ENCODE measurements at regions of chr16 and their contacts with region 1.

Region 1: DNA sequence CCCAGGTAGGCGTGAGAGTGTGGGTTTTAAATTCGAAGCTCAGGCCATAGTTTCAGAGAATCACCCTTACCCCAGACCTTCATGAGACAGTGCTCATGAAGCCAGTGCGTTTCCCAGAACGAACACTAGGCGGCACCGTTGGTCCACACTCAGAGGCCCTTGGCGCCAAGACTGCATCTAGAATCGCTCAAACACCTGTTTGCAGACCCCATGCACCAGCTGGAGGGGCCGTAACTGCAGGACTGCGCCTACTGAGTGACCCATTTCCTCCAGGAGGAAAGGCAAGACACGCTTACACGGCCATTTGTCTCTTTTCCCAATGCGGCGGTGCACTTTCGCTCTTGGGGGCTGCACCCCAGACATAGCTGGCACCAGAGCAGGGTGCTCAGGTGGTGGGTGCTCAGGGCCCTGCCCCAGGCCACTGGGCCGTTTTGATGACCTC is 34.0 kb downstream of the ADGRG5 start:
- DNase-seq: peak; percentile 71 to 92 (median 87)
- ATAC-seq: peak; percentile 86
- H3K4me3 ChIP-seq: no peak overlapping the region
- H3K4me3 Mint-ChIP-seq: no peak overlapping the region
- H3K27ac ChIP-seq: peak overlapping the region in 1 of 2 experiments; percentile 87
- H3K27ac Mint-ChIP-seq: no peak overlapping the region
- H3K4me1 ChIP-seq: peaks cover 33% of the 10 kb centered on the region
- H3K4me1 Mint-ChIP-seq: peaks cover 44% of the 10 kb centered on the region
- H3K27me3 ChIP-seq: no peaks in the 10 kb centered on the region
- H3K27me3 Mint-ChIP-seq: no peaks in the 10 kb centered on the region
- CTCF ChIP-seq: peak; percentile 96

Region 2: GRCh38 chr16:57178793-57179212 is 397.6 kb before region 1 on chr16:
- CTCF ChIA-PET with region 1: no interaction called
- POLR2A ChIA-PET with region 1: no interaction called
- intact Hi-C with region 1: no loop called
- DNase-seq: no peak
- ATAC-seq: no peak
- H3K4me3 ChIP-seq: no peak overlapping the region
- H3K4me3 Mint-ChIP-seq: no peak overlapping the region
- H3K27ac ChIP-seq: no peak overlapping the region
- H3K27ac Mint-ChIP-seq: no peak overlapping the region
- H3K4me1 ChIP-seq: no peaks in the 10 kb centered on the region
- H3K4me1 Mint-ChIP-seq: peaks cover 15% of the 10 kb centered on the region
- H3K27me3 ChIP-seq: no peaks in the 10 kb centered on the region
- H3K27me3 Mint-ChIP-seq: no peaks in the 10 kb centered on the region
- CTCF ChIP-seq: no peak

Region 3: DNA sequence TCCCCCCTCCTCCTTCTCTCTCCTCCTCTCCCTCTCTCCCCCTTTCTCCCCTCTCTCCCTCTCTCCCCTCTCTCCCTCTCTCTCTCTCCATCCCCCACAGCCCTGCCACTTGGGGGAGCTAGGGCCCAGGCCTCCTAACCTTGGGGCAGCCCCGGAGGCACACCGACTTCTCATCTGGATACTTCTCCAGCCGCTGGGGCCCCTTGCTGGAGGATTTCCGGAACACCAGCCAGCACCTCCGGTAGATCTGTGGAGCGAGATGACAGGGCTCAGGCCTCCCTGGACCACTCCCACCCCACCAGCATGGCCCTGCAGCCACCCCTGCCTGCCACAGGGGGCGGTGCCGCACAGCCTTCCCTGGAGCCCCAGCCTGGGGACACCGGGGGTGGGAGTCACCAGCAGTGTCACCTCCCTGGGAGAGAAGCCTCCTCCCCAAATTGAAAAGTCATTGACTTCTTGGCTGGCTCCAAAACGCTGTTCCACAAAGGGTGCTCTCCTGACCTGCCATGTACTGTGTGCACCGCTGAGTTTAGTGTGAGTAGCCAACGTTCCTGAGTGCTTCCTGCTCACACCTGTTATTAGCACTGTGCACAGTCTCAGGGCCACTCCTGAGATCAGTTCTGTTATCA is 100.6 kb before region 1 on chr16:
- CTCF ChIA-PET with region 1: interaction called, 3 read pairs
- POLR2A ChIA-PET with region 1: no interaction called
- intact Hi-C with region 1: loop called in 1 of 2 experiments (anchors 1 kb)
- DNase-seq: peak in 8 of 9 experiments; percentile 44 to 84 (median 79)
- ATAC-seq: peak; percentile 98
- H3K4me3 ChIP-seq: peak overlapping the region in 1 of 2 experiments; percentile 21
- H3K4me3 Mint-ChIP-seq: peak overlapping the region; percentile 39
- H3K27ac ChIP-seq: no peak overlapping the region
- H3K27ac Mint-ChIP-seq: no peak overlapping the region
- H3K4me1 ChIP-seq: peaks cover 15% of the 10 kb centered on the region
- H3K4me1 Mint-ChIP-seq: peaks cover 13% of the 10 kb centered on the region
- H3K27me3 ChIP-seq: no peaks in the 10 kb centered on the region
- H3K27me3 Mint-ChIP-seq: no peaks in the 10 kb centered on the region
- CTCF ChIP-seq: peak; percentile 87

Region 4: DNA sequence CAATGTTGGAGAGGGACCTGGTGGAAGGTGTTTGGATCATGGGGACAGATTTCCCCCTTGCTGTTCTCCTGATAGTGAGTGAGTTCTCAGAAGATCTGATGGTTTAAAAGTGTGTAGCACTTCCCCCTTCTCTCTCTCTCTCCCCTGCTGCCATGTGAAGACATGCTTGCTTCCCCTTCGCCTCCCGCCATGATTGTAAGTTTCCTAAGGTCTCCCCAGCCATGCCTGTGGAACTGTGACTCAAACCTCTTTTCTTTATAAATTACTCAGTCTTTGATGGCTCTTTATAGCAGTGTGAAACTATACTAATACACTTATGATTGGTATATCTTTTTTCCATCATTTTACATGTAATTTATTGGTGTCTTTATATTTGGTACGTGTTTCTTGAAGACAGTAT is 20.6 kb before region 1 on chr16:
- CTCF ChIA-PET with region 1: interaction called, 24 read pairs
- POLR2A ChIA-PET with region 1: interaction called, 4 read pairs
- intact Hi-C with region 1: no loop called
- DNase-seq: no peak
- ATAC-seq: no peak
- H3K4me3 ChIP-seq: no peak overlapping the region
- H3K4me3 Mint-ChIP-seq: no peak overlapping the region
- H3K27ac ChIP-seq: no peak overlapping the region
- H3K27ac Mint-ChIP-seq: no peak overlapping the region
- H3K4me1 ChIP-seq: peaks cover 3% of the 10 kb centered on the region
- H3K4me1 Mint-ChIP-seq: peaks cover 26% of the 10 kb centered on the region
- H3K27me3 ChIP-seq: no peaks in the 10 kb centered on the region
- H3K27me3 Mint-ChIP-seq: no peaks in the 10 kb centered on the region
- CTCF ChIP-seq: no peak

Region 5: GRCh38 chr16:57609541-57610401 is 33.3 kb after region 1 on chr16:
- CTCF ChIA-PET with region 1: interaction called, 62 read pairs
- POLR2A ChIA-PET with region 1: interaction called, 3 read pairs
- intact Hi-C with region 1: no loop called
- DNase-seq: peak in 8 of 9 experiments; percentile 22 to 88 (median 63)
- ATAC-seq: peak; percentile 95
- H3K4me3 ChIP-seq: peak overlapping the region in 1 of 2 experiments; percentile 13
- H3K4me3 Mint-ChIP-seq: peak overlapping the region; percentile 74
- H3K27ac ChIP-seq: peak overlapping the region; percentile 11 to 81
- H3K27ac Mint-ChIP-seq: peak overlapping the region; percentile 84
- H3K4me1 ChIP-seq: peaks cover 15% of the 10 kb centered on the region
- H3K4me1 Mint-ChIP-seq: peaks cover 48% of the 10 kb centered on the region
- H3K27me3 ChIP-seq: no peaks in the 10 kb centered on the region
- H3K27me3 Mint-ChIP-seq: no peaks in the 10 kb centered on the region
- CTCF ChIP-seq: peak; percentile 39

Region 6: DNA sequence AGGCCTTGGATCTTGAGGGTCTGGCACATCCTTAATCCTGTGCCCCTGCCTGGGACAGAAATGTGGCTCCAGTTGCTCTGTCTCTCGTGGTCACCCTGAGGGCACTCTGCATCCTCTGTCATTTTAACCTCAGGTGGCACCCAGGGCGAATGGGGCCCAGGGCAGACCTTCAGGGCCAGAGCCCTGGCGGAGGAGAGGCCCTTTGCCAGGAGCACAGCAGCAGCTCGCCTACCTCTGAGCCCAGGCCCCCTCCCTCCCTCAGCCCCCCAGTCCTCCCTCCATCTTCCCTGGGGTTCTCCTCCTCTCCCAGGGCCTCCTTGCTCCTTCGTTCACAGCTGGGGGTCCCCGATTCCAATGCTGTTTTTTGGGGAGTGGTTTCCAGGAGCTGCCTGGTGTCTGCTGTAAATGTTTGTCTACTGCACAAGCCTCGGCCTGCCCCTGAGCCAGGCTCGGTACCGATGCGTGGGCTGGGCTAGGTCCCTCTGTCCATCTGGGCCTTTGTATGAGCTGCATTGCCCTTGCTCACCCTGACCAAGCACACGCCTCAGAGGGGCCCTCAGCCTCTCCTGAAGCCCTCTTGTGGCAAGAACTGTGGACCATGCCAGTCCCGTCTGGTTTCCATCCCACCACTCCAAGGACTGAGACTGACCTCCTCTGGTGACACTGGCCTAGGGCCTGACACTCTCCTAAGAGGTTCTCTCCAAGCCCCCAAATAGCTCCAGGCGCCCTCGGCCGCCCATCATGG is 87.6 kb after region 1 on chr16:
- CTCF ChIA-PET with region 1: interaction called, 12 read pairs
- POLR2A ChIA-PET with region 1: no interaction called
- intact Hi-C with region 1: no loop called
- DNase-seq: no peak
- ATAC-seq: no peak
- H3K4me3 ChIP-seq: no peak overlapping the region
- H3K4me3 Mint-ChIP-seq: no peak overlapping the region
- H3K27ac ChIP-seq: no peak overlapping the region
- H3K27ac Mint-ChIP-seq: no peak overlapping the region
- H3K4me1 ChIP-seq: no peaks in the 10 kb centered on the region
- H3K4me1 Mint-ChIP-seq: no peaks in the 10 kb centered on the region
- H3K27me3 ChIP-seq: no peaks in the 10 kb centered on the region
- H3K27me3 Mint-ChIP-seq: no peaks in the 10 kb centered on the region
- CTCF ChIP-seq: no peak

Region 7: DNA sequence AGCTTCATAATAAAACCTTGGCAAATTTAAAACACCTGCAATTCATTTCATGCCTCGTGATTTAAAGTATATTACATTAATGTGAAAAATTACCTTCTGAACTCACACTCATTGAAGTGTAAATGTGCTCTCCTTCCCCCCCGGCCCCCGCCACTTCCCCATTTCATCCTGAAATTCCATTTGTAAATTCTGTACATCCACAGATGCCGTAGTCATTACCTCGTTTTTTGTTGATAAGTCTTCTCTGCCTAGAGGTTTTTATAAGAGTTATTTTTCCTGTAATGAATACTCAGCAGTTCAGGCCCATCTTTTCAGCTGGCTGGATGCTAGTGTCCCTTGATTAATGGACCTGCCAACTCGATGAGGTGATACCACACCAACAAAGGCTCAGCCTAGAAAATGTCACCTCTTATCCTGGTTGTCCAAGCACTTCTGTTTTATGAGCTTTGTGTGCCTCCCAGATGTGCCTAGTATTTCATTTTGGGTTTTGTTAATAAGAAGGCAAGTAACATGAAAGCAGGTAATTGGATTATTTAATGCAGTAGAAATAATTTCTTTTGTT is 290.6 kb after region 1 on chr16:
- CTCF ChIA-PET with region 1: no interaction called
- POLR2A ChIA-PET with region 1: no interaction called
- intact Hi-C with region 1: no loop called
- DNase-seq: no peak
- ATAC-seq: no peak
- H3K4me3 ChIP-seq: no peak overlapping the region
- H3K4me3 Mint-ChIP-seq: no peak overlapping the region
- H3K27ac ChIP-seq: no peak overlapping the region
- H3K27ac Mint-ChIP-seq: no peak overlapping the region
- H3K4me1 ChIP-seq: no peaks in the 10 kb centered on the region
- H3K4me1 Mint-ChIP-seq: no peaks in the 10 kb centered on the region
- H3K27me3 ChIP-seq: no peaks in the 10 kb centered on the region
- H3K27me3 Mint-ChIP-seq: peaks cover 17% of the 10 kb centered on the region
- CTCF ChIP-seq: no peak

Region 8: DNA sequence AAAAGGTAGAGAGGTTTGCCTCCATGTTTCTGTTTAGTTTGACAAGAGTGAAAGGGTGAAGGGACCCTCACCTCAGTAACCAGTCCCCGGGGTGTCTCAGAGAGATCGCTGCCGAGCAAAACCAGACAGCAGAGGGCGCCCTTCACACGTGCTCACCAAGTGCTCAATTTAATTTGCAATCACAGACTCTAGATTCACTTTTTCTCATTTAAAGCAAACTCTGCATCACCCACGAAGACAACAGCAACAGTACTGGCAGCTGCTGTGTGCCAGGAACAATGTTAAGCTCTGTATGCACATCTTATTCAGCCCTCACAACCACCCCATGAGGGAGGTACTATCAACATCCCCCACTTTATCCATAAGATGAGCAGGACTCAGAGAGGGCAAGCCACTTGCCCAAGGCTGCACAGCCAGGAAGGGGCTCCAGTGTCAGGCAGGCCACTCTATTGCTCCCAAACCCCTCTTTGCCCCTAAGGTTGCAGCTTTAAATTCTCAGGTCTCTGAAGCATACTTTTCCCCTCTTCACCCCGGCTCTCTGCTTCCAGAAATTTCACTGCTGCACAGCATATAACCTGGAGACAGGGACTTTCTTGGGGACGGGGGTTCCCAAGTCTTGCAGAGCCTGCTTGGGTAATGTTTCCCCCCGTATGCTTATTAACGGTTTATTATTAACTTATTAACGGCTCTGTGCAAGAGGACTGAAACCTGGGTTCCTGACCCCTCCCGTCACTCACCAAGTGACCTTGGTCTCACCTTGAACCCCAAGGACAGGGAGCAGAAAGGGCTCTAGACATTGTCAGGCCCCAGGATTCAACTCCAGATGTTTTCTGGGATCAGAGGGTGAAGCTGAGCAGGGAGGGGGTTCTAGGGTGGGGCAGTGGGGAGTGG is 323.6 kb after region 1 on chr16:
- CTCF ChIA-PET with region 1: interaction called, 6 read pairs
- POLR2A ChIA-PET with region 1: no interaction called
- intact Hi-C with region 1: loop called (anchors 1 to 10 kb)
- DNase-seq: peak; percentile 59 to 89 (median 82)
- ATAC-seq: peak; percentile 76
- H3K4me3 ChIP-seq: no peak overlapping the region
- H3K4me3 Mint-ChIP-seq: no peak overlapping the region
- H3K27ac ChIP-seq: no peak overlapping the region
- H3K27ac Mint-ChIP-seq: no peak overlapping the region
- H3K4me1 ChIP-seq: no peaks in the 10 kb centered on the region
- H3K4me1 Mint-ChIP-seq: peaks cover 3% of the 10 kb centered on the region
- H3K27me3 ChIP-seq: no peaks in the 10 kb centered on the region
- H3K27me3 Mint-ChIP-seq: peaks cover 20% of the 10 kb centered on the region
- CTCF ChIP-seq: peak; percentile 92

Measured in CD8-positive, alpha-beta T cell (primary cell).